Vagina (tissue), 2 donors: ENCODE measurements at regions of chr16 and their contacts with region 1.

Region 1: GRCh38 chr16:66717776-66718175 is 21.2 kb upstream of the CMTM4 start:
- DNase-seq: no peak
- H3K4me3 ChIP-seq: no peak overlapping the region
- H3K27ac ChIP-seq: no peak overlapping the region
- H3K4me1 ChIP-seq: no peaks in the 10 kb centered on the region
- H3K27me3 ChIP-seq: no peaks in the 10 kb centered on the region
- CTCF ChIP-seq: no peak
- POLR2A ChIP-seq: no peak

Region 2: GRCh38 chr16:66751303-66751991 is 33.7 kb after region 1 on chr16 and contains the start of gene DYNC1LI2:
- intact Hi-C with region 1: loop called (anchors 2 kb)
- DNase-seq: no peak
- H3K4me3 ChIP-seq: peak within 1 kb of the TSS; percentile 80 to 99
- H3K27ac ChIP-seq: peak within 1 kb of the TSS; percentile 89
- H3K4me1 ChIP-seq: peaks cover 44% of the 10 kb centered on the region
- H3K27me3 ChIP-seq: no peaks in the 10 kb centered on the region
- CTCF ChIP-seq: peak; percentile 51 to 85 (median 55)
- POLR2A ChIP-seq: no peak
- total RNA-seq, gene DYNC1LI2: 149 TPM